ENCODE measurements at regions of chr16 and their contacts with region 1.

Region 1: DNA sequence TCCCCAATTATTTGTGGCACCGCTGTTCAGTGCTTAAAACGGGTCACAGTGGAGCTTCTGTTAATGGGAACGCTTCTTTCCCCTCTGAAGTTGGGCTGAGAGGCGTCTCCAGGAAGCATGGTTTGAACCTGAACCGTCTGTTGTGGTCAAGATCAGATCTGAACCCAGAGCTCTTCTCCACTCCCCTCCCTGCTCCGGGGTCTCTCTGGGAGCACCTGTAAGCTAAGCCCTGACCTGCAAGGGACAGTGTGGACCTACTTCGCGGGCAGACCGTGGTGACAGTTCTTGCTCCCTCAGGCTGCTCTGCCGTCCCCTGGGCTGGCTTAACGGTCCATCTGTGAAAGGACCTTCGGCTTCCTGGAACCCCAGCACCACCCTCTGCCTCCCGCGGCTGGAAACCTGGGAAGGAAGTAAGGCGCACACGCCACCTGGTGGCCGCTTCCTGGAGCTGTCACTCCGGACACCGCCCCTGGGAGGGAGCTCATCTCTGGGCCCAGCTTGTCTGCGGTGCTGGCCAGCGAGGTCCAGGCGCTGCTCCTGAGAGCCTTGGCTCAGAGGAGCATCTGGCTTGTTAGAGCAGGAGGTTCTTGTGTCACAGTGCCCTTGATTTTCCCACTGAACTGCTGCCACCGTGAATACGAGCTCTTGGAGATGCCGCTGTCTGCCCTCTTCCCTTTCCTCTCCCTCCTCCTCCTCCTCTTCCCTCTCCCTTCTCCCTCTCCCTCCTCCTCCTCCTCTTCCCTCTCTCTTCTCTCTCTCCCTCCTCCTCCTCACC is 518.5 kb upstream of the EEF2KMT start:
- DNase-seq: peak; percentile 9 to 28
- ATAC-seq: peak in 3 of 8 donors; percentile 39 to 74 (median 41)
- H3K4me3 ChIP-seq: no peak overlapping the region
- H3K27ac ChIP-seq: no peak overlapping the region
- H3K4me1 ChIP-seq: no peaks in the 10 kb centered on the region
- H3K27me3 ChIP-seq: peaks cover 7 to 45% (median 25%) of the 10 kb centered on the region in 7 donors
- CTCF ChIP-seq: peak in 8 of 9 donors; percentile 41 to 71 (median 61)

Region 2: GRCh38 chr16:5234295-5235050 is 381.6 kb before region 1 on chr16:
- intact Hi-C with region 1: loop called in 1 of 10 experiments (anchors 10 kb)
- DNase-seq: no peak
- ATAC-seq: no peak
- H3K4me3 ChIP-seq: no peak overlapping the region
- H3K27ac ChIP-seq: no peak overlapping the region
- H3K4me1 ChIP-seq: no peaks in the 10 kb centered on the region
- H3K27me3 ChIP-seq: peaks cover 0 to 38% (median 20%) of the 10 kb centered on the region in 7 donors
- CTCF ChIP-seq: no peak

Region 3: GRCh38 chr16:5502467-5502869 is 113.6 kb before region 1 on chr16:
- intact Hi-C with region 1: loop called in 2 of 10 experiments (anchors 1 to 10 kb)
- DNase-seq: no peak
- ATAC-seq: no peak
- H3K4me3 ChIP-seq: no peak overlapping the region
- H3K27ac ChIP-seq: no peak overlapping the region
- H3K4me1 ChIP-seq: no peaks in the 10 kb centered on the region
- H3K27me3 ChIP-seq: peaks cover 0 to 18% (median 0%) of the 10 kb centered on the region in 7 donors
- CTCF ChIP-seq: peak in 6 of 9 donors; percentile 20 to 45 (median 29)

Region 4: DNA sequence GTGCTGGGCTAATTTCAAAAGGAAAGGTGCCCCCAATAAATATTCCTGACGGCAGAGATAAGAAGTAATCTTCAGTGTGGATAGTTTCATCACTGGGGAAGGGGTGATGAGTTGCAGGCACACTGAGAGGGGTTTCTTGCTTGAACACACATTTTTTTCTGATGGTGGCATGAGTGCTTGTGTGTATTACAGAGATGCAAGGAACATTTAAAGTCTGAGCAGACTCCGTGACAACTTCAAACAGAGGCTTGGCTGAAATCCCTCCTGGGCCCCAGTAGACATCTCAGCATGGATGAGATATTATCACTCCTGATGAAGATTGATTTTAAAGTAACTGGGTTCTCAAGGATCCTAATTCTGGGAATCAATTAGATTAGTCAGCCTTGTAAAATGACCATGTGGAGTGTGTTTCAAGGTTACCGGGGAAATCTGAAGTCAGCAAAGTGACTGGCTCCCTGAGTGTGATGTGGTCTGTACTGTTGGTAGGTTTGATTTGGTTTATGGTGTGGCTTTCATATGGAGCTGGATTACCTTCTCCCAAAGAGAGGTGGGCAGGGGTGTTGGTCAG is 82.7 kb before region 1 on chr16:
- intact Hi-C with region 1: loop called in 1 of 10 experiments (anchors 10 kb)
- DNase-seq: no peak
- ATAC-seq: no peak
- H3K4me3 ChIP-seq: no peak overlapping the region
- H3K27ac ChIP-seq: no peak overlapping the region
- H3K4me1 ChIP-seq: no peaks in the 10 kb centered on the region
- H3K27me3 ChIP-seq: no peaks in the 10 kb centered on the region
- CTCF ChIP-seq: no peak

Measured in heart right ventricle (tissue), 16 donors.